ENCODE measurements at regions of chr5 and their contacts with region 1.

Region 1: GRCh38 chr5:179697993-179698934 is 503 bp upstream of the CANX start:
- DNase-seq: peak; percentile 99
- ATAC-seq: peak; percentile 94 to 97

Region 2: GRCh38 chr5:178483620-178484019 is 1214.6 kb before region 1 on chr5:
- intact Hi-C with region 1: no loop called
- DNase-seq: peak; percentile 38
- ATAC-seq: peak; percentile 38 to 48

Region 3: GRCh38 chr5:179763215-179763945 is 65.1 kb after region 1 on chr5:
- intact Hi-C with region 1: loop called in 1 of 2 experiments (anchors 10 kb)
- DNase-seq: peak; percentile 66
- ATAC-seq: peak; percentile 59 to 79